ENCODE measurements at regions of chr2 and their contacts with region 1.

Region 1: DNA sequence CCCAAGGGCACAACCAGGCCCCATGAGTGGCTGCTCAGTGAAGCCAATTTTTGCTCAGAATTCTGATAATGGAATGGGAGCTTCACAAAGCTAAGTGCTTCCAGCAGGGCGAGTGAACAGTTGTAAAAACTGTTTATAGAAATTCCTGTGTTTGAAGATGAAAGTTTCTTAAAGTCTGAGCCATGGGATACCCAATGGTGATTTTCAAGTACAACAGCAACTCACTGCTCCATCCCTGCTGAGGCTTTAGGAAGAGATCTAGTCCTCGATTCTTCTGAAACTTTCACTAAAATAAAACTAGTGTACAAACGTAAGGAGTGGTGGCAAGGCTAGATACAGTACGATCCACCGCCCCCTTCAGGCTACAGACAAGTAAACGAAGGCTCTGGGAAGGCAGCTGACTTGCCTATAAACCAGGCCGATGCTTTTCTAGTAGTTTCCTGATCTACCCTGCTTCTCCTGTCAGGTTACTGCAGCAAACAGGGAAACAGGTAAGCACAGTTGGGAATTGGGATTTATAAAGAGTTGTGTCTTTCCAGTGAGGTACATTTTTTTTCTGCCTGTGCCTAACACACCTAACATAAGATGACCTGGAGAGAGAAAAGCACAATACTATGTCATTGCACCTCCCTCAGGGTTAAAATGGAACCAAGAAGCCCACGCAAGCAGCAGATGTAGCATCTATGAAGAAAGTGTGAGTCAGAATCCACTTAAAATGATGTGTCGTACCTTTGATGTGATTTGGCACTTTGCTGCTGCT is 108.7 kb downstream of the UXS1 start:
- DNase-seq: peak; percentile 43
- H3K4me3 Mint-ChIP-seq: no peak overlapping the region
- H3K27ac Mint-ChIP-seq: no peak overlapping the region
- H3K4me1 Mint-ChIP-seq: no peaks in the 10 kb centered on the region
- H3K27me3 Mint-ChIP-seq: no peaks in the 10 kb centered on the region
- CTCF ChIP-seq: no peak

Region 2: DNA sequence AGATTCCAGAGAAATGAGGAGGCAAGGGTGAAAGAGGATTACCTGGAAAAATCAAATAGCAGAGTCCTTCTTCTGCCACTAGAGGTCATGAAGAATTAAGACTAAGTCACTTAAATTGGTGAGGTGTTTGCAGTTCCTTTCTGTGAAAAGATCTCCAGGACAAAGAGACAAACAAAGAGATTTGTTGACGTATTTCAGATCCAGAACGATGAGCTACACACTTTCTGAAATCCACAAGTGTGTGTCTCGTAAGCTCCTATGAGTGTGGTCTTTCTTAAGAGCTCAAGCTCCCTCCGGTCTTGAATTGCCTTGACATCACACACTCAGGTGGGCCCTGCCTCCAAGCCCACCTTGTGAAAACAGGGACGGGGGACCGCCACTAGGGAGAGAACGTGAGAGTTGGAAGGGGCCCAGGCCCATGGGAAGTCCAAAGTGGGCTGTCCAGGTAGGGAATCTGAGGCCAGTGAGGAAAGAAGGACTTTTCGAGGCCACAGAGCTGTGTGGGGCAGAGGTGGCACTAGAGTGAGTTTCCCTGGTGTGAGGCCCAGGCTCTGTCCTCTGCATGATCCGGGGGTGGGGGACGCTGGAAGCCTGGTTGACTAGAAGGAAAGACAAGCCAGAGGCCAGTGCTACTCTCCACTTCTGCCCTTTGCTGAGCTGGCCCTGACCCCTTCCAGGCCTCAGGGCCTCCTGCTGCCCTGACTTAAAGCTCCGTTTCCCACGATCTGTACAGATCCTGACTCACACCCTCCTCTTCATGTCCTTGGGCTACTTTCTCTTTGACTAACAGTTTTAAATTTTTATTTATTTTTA is 508.7 kb before region 1 on chr2:
- CTCF ChIA-PET with region 1: no interaction called
- intact Hi-C with region 1: loop called (anchors 10 kb)
- DNase-seq: peak; percentile 23
- H3K4me3 Mint-ChIP-seq: peak overlapping the region; percentile 30
- H3K27ac Mint-ChIP-seq: peak overlapping the region; percentile 98
- H3K4me1 Mint-ChIP-seq: peaks cover 48% of the 10 kb centered on the region
- H3K27me3 Mint-ChIP-seq: peaks cover 11% of the 10 kb centered on the region
- CTCF ChIP-seq: peak; percentile 61

Region 3: DNA sequence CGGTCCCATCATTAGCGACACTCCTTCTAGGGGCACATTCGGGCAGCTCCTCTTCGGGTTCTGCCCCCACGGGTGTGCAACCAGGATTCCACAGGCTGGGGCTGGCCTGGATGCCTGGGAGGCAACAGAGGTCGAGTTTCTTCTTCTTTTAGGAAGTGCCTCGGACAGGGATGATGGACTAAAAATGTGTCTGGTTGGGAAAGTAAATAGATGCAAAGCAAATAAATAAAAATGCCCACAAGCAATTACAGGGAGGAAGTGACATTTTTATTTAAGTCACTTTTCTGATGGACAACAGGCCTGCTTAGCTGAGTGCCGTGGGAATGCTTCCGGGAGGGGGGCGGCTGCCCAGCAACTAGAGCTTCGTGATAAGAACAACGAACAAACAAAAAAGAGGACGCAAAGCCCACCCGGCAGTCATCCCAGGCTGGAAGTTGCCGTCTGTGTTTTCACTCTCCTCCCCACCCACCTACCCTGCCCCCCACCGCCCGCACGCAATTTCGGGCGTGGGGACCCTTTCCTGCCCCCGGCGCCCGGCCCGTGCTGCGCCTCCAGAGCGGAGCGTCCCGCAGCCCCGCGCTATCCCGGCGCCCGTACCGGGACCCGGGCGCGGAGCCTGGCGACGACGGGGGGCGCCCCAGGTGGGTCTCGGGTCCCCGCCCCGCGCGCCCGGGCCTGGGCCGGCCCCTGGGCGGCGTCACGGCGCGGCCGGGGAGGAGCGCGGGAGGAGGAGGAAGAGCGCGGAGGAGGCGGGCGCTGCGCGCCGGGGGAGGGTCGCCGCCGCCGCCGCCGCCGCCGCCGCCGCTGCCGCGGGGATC is 341.1 kb before region 1 on chr2:
- CTCF ChIA-PET with region 1: no interaction called
- intact Hi-C with region 1: loop called (anchors 5 kb)
- DNase-seq: peak; percentile 72
- H3K4me3 Mint-ChIP-seq: peak overlapping the region; percentile 86
- H3K27ac Mint-ChIP-seq: peak overlapping the region; percentile 89
- H3K4me1 Mint-ChIP-seq: peaks cover 32% of the 10 kb centered on the region
- H3K27me3 Mint-ChIP-seq: peaks cover 12% of the 10 kb centered on the region
- CTCF ChIP-seq: no peak

Region 4: GRCh38 chr2:105919826-105920225 is 165.5 kb before region 1 on chr2:
- CTCF ChIA-PET with region 1: interaction called, 3 read pairs
- intact Hi-C with region 1: loop called (anchors 10 kb)
- DNase-seq: peak; percentile 73
- H3K4me3 Mint-ChIP-seq: peak overlapping the region; percentile 2
- H3K27ac Mint-ChIP-seq: peak overlapping the region; percentile 45
- H3K4me1 Mint-ChIP-seq: peaks cover 57% of the 10 kb centered on the region
- H3K27me3 Mint-ChIP-seq: no peaks in the 10 kb centered on the region
- CTCF ChIP-seq: peak; percentile 37

Region 5: GRCh38 chr2:106257830-106258229 is 172.5 kb after region 1 on chr2:
- CTCF ChIA-PET with region 1: no interaction called
- intact Hi-C with region 1: no loop called
- DNase-seq: no peak
- H3K4me3 Mint-ChIP-seq: no peak overlapping the region
- H3K27ac Mint-ChIP-seq: no peak overlapping the region
- H3K4me1 Mint-ChIP-seq: no peaks in the 10 kb centered on the region
- H3K27me3 Mint-ChIP-seq: no peaks in the 10 kb centered on the region
- CTCF ChIP-seq: no peak

Measured in Calu3 (cell line).